ENCODE measurements at regions of chr7 and their contacts with region 1.

Region 1: GRCh38 chr7:69395061-69395714 is 203.1 kb upstream of the AUTS2 start:
- DNase-seq: peak in 1 of 2 experiments; percentile 59
- H3K4me3 ChIP-seq: no peak overlapping the region
- H3K27ac ChIP-seq: no peak overlapping the region
- H3K4me1 ChIP-seq: peaks cover 6% of the 10 kb centered on the region
- H3K27me3 ChIP-seq: no peaks in the 10 kb centered on the region
- CTCF ChIP-seq: no peak

Region 2: DNA sequence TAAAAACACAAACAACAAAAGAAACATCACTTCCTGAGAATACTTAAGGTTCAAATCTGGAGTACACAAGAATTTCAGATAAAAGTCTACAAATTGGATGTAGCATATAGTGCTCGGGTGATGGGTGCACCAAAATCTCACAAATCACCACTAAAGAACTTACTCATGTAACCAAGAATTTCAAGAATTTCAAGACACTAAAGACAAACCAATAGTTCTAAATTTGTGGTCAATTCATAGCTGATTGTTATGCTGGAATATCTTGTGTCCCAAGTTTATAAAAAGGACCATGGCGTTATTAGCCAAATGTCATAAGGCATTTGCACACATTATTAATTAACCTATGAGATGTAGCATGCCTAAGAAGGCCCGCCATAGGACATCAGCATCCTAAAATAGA is 1001.1 kb before region 1 on chr7:
- CTCF ChIA-PET with region 1: no interaction called
- POLR2A ChIA-PET with region 1: interaction called, 10 read pairs
- intact Hi-C with region 1: no loop called
- DNase-seq: no peak
- H3K4me3 ChIP-seq: no peak overlapping the region
- H3K27ac ChIP-seq: no peak overlapping the region
- H3K4me1 ChIP-seq: no peaks in the 10 kb centered on the region
- H3K27me3 ChIP-seq: no peaks in the 10 kb centered on the region
- CTCF ChIP-seq: no peak

Region 3: DNA sequence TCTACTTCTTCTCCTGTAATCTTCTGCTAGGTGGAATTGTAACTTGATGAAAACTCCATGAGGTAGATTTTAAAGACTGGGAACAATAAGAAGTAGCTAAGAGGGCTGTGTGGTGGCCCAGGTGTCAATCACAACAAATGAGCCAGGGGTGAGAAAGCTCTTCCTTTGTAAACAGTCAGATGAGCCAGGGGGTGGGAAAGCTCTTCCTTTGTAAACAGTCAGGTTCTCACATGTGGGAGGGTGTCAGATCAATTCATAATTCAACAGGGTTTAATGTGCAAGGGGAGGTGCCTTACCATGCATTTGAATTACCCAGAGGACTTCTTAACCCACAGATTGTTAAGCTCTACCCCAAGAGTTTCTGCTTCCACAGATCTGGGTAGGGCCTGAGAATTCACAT is 109.3 kb before region 1 on chr7:
- CTCF ChIA-PET with region 1: no interaction called
- POLR2A ChIA-PET with region 1: no interaction called
- intact Hi-C with region 1: no loop called
- DNase-seq: no peak
- H3K4me3 ChIP-seq: no peak overlapping the region
- H3K27ac ChIP-seq: no peak overlapping the region
- H3K4me1 ChIP-seq: no peaks in the 10 kb centered on the region
- H3K27me3 ChIP-seq: no peaks in the 10 kb centered on the region
- CTCF ChIP-seq: no peak

Region 4: GRCh38 chr7:69457595-69458504 is 62.7 kb after region 1 on chr7:
- CTCF ChIA-PET with region 1: no interaction called
- POLR2A ChIA-PET with region 1: no interaction called
- intact Hi-C with region 1: no loop called
- DNase-seq: no peak
- H3K4me3 ChIP-seq: no peak overlapping the region
- H3K27ac ChIP-seq: no peak overlapping the region
- H3K4me1 ChIP-seq: no peaks in the 10 kb centered on the region
- H3K27me3 ChIP-seq: no peaks in the 10 kb centered on the region
- CTCF ChIP-seq: no peak

Region 5: DNA sequence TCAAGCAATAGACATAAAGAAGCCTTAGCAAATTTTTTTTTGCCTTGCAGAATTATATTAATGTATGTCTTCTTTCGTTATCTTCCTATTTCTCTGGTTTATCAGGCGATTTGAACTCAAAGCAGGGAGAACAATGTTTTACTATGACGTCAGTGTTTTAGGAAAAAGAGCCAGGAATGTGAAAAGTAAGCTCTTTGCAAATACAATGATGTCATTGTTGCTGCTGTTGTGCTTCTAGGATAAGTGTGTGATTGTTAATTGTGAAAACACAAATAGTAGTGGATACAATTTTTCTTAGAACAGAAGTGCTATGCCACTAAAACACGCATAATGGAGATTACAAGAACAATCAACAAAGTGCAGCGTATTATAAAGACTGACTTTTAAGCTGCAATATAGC is 193.6 kb after region 1 on chr7:
- CTCF ChIA-PET with region 1: no interaction called
- POLR2A ChIA-PET with region 1: no interaction called
- intact Hi-C with region 1: no loop called
- DNase-seq: no peak
- H3K4me3 ChIP-seq: no peak overlapping the region
- H3K27ac ChIP-seq: no peak overlapping the region
- H3K4me1 ChIP-seq: no peaks in the 10 kb centered on the region
- H3K27me3 ChIP-seq: peaks cover 8% of the 10 kb centered on the region; the same call in 1 of the 2 replicates
- CTCF ChIP-seq: no peak